Activated naive CD4-positive, alpha-beta T cell treated with anti-CD3 and anti-CD28 coated beads for 36 hours (primary cell): ENCODE measurements at regions of chr18 and their contacts with region 1.

Region 1: DNA sequence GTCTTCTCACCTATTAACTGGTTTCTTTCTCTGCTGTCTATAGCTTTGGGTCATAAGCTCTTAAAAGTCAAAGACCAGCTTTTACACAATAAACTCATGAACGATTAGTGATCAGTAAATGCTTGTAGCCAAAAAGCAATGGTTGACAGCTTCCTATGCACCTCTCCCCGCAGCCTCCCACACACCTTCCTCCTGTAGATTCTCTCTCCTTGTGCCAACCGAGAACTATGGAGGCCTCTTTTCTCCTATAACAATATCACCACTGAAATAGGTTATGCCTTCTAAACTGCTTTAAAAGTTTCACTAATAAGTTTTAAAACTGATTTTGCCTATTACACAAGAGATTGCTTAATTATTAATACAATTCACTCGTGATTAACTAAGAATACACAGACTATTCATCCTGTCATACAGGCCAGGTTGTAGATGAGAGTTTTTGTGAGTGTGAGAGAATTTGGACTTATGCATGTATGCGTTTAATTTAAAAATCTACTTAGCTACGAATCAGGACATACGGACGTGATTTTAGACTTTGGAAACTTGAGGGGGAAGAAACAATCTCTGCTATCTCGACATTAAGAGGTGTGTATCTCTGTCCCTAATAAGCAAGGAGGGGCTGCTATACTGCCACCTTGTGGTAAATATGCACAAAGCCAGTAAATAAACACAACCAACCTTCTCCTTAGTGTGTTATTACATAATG is 229.1 kb upstream of the RBBP8 start:
- DNase-seq: peak; percentile 13
- H3K4me3 Mint-ChIP-seq: no peak overlapping the region
- H3K27ac Mint-ChIP-seq: no peak overlapping the region
- H3K4me1 Mint-ChIP-seq: no peaks in the 10 kb centered on the region
- H3K27me3 Mint-ChIP-seq: peaks cover 6% of the 10 kb centered on the region

Region 2: DNA sequence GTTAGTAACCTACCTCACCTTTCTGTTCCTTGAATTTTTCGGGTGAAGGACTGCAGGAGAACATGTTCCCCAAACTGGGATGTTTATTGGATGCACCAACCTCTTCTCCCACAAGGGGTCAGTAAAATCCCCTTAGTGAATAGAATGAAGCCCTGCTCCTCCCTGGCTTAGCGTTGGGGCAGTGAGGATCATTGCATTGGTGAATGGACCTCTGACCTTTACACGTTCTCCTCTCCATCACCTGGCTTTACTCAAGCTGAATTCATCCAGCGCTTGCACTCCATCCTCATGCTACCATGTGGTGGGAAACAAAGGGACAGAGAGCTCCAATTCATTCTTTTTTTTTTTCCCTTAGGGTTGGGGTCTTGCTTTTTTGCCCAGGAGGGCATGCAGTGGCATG is 806.2 kb before region 1 on chr18:
- CTCF ChIA-PET with region 1: no interaction called
- intact Hi-C with region 1: loop called (anchors 10 kb)
- DNase-seq: peak; percentile 46
- H3K4me3 Mint-ChIP-seq: no peak overlapping the region
- H3K27ac Mint-ChIP-seq: no peak overlapping the region
- H3K4me1 Mint-ChIP-seq: peaks cover 5% of the 10 kb centered on the region
- H3K27me3 Mint-ChIP-seq: peaks cover 11% of the 10 kb centered on the region